HepG2 (cell line): ENCODE measurements at regions of chr3 and their contacts with region 1.

Region 1: GRCh38 chr3:136250226-136250902 is at the start of gene PCCB:
- DNase-seq: peak; percentile 93
- ATAC-seq: peak; percentile 96
- H3K4me3 ChIP-seq: peak within 1 kb of the TSS; percentile 54 to 77 (median 72)
- H3K27ac ChIP-seq: peak within 1 kb of the TSS; percentile 95
- H3K4me1 ChIP-seq: peaks cover 66% of the 10 kb centered on the region
- H3K27me3 ChIP-seq: no peaks in the 10 kb centered on the region
- CTCF ChIP-seq: peak; percentile 95
- EP300 ChIP-seq: no peak
- POLR2A ChIP-seq: peak; percentile 82 to 87
- RAD21 ChIP-seq: peak; percentile 77
- total RNA-seq, gene PCCB: 88.7 and 92.6 TPM in 2 replicates

Region 2: GRCh38 chr3:136239094-136239493 is 11.3 kb before region 1 on chr3:
- CTCF ChIA-PET with region 1: interaction called, 3 read pairs
- POLR2A ChIA-PET with region 1: interaction called, 34 read pairs
- in situ Hi-C with region 1: no loop called
- intact Hi-C with region 1: loop called (anchors 1 kb)
- DNase-seq: peak; percentile 10
- ATAC-seq: no peak
- H3K4me3 ChIP-seq: no peak overlapping the region
- H3K27ac ChIP-seq: no peak overlapping the region
- H3K4me1 ChIP-seq: peaks cover 55% of the 10 kb centered on the region
- H3K27me3 ChIP-seq: no peaks in the 10 kb centered on the region; a peak in 2 of 5 replicates
- CTCF ChIP-seq: no peak
- EP300 ChIP-seq: no peak
- POLR2A ChIP-seq: no peak
- RAD21 ChIP-seq: no peak